GM18951 (cell line): ENCODE measurements at regions of chr18 and their contacts with region 1.

Region 1: GRCh38 chr18:12376718-12377555 is at the start of gene AFG3L2:
- POLR2A ChIP-seq: peak; percentile 98

Region 2: GRCh38 chr18:12947355-12948041 is 570.6 kb after region 1 on chr18 and contains the start of gene SEH1L:
- in situ Hi-C with region 1: loop called (anchors 25 kb)
- POLR2A ChIP-seq: peak; percentile 55